ENCODE measurements at regions of chr1 and their contacts with region 1.

Region 1: DNA sequence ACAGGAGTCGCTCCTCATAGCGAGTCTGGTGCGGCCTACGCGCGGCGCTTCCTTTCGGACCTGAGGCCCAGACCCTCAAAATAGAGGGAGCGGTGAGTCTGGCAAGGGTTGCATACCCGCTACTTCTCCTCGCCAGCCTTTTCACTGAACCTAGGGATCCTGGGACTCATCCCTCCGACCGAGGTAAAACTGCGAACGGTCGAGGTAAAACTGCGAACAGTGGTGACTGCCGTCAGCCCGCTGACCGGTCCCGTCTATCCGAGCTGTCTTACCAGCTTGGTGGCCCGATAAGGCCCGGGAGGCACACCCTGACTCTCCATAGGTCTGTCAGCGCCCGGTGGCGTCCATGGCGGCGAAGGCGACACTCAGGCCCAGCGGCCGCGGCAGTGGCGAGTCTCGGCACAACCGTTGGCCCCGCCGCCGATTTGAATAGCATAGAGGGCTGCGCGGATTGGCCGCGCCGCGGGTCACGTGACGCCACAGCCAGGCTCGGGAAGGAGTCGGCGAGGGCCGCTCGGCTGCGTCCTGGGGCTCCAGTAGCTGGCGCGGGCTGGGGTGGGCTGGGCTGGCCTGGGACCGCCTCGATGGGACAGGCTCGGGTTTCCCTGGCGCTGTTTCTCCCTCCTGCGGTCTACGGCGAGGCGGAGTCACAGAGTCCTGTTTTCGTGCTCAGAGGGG is at the start of gene DEPDC1:
- DNase-seq: peak; percentile 93 to 97 (median 95)
- ATAC-seq: peak; percentile 97
- H3K4me3 ChIP-seq: peak within 1 kb of the TSS; percentile 76
- H3K27ac ChIP-seq: peak within 1 kb of the TSS; percentile 99
- H3K4me1 ChIP-seq: peaks cover 3 to 7% of the 10 kb centered on the region in 2 experiments; a peak in 1 of 5 replicates
- H3K27me3 ChIP-seq: no peaks in the 10 kb centered on the region
- CTCF ChIP-seq: no peak
- EP300 ChIP-seq: no peak
- POLR2A ChIP-seq: peak; percentile 87
- RAD21 ChIP-seq: no peak
- polyA plus RNA-seq, gene DEPDC1: 9.9 to 14.3 TPM

Region 2: DNA sequence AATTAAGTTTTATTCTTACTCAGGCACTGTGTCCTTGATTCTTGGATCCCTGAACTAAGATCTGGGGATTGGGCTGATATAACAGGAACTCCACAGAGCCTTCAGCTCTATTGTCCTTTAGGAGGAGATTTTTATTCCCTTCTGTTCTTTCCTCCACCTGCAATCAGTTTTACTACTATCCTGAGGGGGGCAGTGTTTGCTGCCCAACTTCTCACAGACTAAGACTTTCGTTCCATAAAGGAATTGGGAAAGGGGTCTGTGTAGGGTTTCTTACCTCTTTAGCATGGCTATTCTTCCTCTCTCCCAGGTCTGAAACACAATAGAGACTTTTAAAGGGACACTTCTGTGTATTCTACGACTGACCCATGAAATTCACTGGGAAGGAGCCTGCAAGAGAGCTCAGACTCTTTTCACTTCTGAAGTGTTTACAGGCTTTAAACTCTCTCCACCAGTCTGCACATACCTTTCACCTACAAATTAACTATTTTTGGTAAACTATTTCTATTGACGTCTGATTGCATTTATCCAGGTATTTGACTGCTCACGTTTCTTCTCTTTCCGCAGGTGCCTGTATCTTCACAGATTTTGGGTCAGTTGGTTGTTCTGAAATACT is 103.3 kb after region 1 on chr1:
- CTCF ChIA-PET with region 1: no interaction called
- POLR2A ChIA-PET with region 1: no interaction called
- in situ Hi-C with region 1: no loop called
- intact Hi-C with region 1: no loop called
- DNase-seq: peak in 3 of 4 experiments; percentile 3 to 10 (median 9)
- ATAC-seq: no peak
- H3K4me3 ChIP-seq: no peak overlapping the region
- H3K27ac ChIP-seq: no peak overlapping the region
- H3K4me1 ChIP-seq: no peaks in the 10 kb centered on the region
- H3K27me3 ChIP-seq: no peaks in the 10 kb centered on the region
- CTCF ChIP-seq: 0 out of 6 replicates have a peak, but pooled peaks of 1 of the 3 experiments have one; percentile 24
- EP300 ChIP-seq: no peak
- POLR2A ChIP-seq: no peak
- RAD21 ChIP-seq: peak in 1 of 2 experiments; percentile 30; a peak in 2 of 4 replicates

Region 3: DNA sequence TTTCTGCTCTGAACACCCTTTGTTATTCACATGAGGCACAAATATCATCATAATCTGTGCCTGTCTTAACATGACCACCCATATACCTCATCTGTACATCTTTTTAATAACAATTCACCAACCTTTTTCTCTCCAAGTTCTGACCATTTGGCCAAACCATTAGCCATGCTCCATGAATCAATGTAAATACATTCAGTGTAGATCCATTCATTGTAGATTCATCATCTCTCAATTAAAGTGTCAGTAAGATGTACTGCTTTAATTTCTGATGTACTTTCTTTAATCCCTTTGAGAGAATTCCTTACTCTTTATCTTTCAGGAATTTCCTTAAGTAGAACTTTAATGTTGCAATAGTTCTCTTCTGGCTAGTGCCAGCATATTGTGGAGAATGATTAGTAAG is 944.7 kb after region 1 on chr1:
- CTCF ChIA-PET with region 1: no interaction called
- POLR2A ChIA-PET with region 1: no interaction called
- in situ Hi-C with region 1: no loop called
- intact Hi-C with region 1: no loop called
- DNase-seq: no peak
- ATAC-seq: no peak
- H3K4me3 ChIP-seq: no peak overlapping the region
- H3K27ac ChIP-seq: no peak overlapping the region
- H3K4me1 ChIP-seq: no peaks in the 10 kb centered on the region
- H3K27me3 ChIP-seq: no peaks in the 10 kb centered on the region
- CTCF ChIP-seq: no peak
- EP300 ChIP-seq: no peak
- POLR2A ChIP-seq: no peak
- RAD21 ChIP-seq: no peak

Region 4: DNA sequence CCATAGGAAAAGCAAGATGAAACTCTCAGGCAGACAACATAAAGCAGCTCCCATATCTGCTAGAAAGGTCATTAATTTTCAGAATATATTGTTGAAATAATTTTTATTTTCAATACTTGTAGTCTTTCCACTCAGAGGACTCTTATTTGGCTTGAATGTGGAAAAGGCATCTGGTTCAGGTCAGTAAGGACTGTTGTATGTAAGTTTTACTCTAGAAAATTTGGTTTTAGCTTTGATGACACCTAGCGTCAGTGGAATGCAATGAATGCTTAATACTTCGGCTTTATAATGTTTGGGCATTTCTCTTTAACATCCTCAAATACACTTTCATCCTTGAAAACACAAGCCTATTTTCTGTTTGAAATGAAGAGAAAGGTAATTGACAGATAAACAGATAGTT is 1645.3 kb after region 1 on chr1:
- CTCF ChIA-PET with region 1: no interaction called
- POLR2A ChIA-PET with region 1: no interaction called
- in situ Hi-C with region 1: loop called (anchors 25 kb)
- intact Hi-C with region 1: no loop called
- DNase-seq: peak in 3 of 4 experiments; percentile 9 to 12 (median 11)
- ATAC-seq: peak; percentile 74
- H3K4me3 ChIP-seq: no peak overlapping the region
- H3K27ac ChIP-seq: no peak overlapping the region
- H3K4me1 ChIP-seq: 0 out of 5 replicates have a peak, but pooled peaks cover 0 to 5% of the 10 kb centered on the region in 2 experiments
- H3K27me3 ChIP-seq: no peaks in the 10 kb centered on the region
- CTCF ChIP-seq: peak in 2 of 3 experiments; percentile 12 to 54; a peak in 3 of 6 replicates
- EP300 ChIP-seq: no peak
- POLR2A ChIP-seq: no peak
- RAD21 ChIP-seq: peak; percentile 66 to 74